ENCODE measurements at regions of chr12 and their contacts with region 1.

Region 1: DNA sequence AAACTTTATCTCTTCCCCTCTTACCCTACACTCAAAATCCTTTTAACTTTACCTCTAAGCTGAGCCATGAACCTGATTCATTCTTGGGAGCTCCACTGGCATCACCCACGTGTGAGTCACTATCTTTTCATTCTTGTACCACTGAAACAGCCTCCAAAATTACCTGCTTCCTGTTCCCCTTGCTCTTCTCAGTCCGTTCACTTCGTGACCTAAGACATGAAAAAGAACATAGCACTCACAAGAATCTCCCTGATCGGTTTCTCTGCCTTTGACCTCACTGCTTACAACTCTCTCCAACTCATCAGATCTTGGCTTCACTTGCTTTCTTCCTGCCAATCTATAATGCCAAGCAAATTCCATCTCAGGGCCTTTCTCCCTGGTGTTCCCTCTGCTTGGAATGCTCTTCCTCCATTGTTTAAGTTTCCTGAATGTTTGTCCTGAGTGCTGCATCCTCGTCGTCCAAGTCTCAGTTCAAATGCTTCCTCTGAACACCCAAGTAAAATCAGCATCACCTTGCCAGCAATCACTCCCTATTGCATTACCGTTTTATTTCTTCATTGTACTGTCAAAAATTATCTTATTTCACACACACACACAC is 9.2 kb downstream of the GLIPR1 start:
- H3K4me3 Mint-ChIP-seq: no peak overlapping the region
- H3K27ac Mint-ChIP-seq: peak overlapping the region; percentile 16
- H3K4me1 Mint-ChIP-seq: peaks cover 44% of the 10 kb centered on the region
- H3K27me3 Mint-ChIP-seq: no peaks in the 10 kb centered on the region

Region 2: GRCh38 chr12:75378354-75378753 is 111.4 kb before region 1 on chr12:
- intact Hi-C with region 1: no loop called
- H3K4me3 Mint-ChIP-seq: no peak overlapping the region
- H3K27ac Mint-ChIP-seq: no peak overlapping the region
- H3K4me1 Mint-ChIP-seq: no peaks in the 10 kb centered on the region
- H3K27me3 Mint-ChIP-seq: no peaks in the 10 kb centered on the region

Region 3: DNA sequence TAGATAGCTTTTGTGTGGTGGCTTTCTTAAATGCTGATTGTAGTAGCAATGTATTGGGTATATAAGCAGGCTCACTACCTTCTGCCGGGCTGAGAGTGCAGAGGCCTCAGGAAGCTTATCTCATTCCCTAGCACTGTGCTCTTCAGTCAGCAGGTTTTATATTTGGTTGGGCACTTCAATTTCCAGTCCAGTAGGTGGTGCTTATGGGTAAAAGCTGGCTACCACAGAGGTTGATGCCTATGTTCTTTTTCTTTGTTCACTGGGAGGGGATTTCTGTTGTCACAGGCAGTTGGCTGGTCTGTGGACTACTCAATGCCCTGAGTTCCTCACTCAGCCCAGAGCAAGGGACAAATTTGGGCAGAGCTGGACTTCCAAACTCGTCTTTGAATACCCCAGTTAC is 52.1 kb before region 1 on chr12:
- intact Hi-C with region 1: loop called (anchors 1 kb)
- H3K4me3 Mint-ChIP-seq: no peak overlapping the region
- H3K27ac Mint-ChIP-seq: no peak overlapping the region
- H3K4me1 Mint-ChIP-seq: peaks cover 12% of the 10 kb centered on the region
- H3K27me3 Mint-ChIP-seq: no peaks in the 10 kb centered on the region

Measured in dendritic cell treated with granulocyte-macrophage colony-stimulating factor and Interleukin-4, amounts not matched to agents 40 ng/mL and 50 ng/mL, for 4 days (primary cell).